A549 (cell line): ENCODE measurements at regions of chr21 and their contacts with region 1.

Region 1: GRCh38 chr21:17554679-17555465 is 42.0 kb downstream of the CXADR start:
- DNase-seq: peak; percentile 26 to 27
- ATAC-seq: peak in 1 of 2 experiments; percentile 81; a peak in 3 of 6 replicates
- H3K4me3 ChIP-seq: no peak overlapping the region
- H3K27ac ChIP-seq: no peak overlapping the region
- H3K4me1 ChIP-seq: no peaks in the 10 kb centered on the region
- CTCF ChIP-seq: peak; percentile 53
- EP300 ChIP-seq: no peak
- POLR2A ChIP-seq: no peak
- RAD21 ChIP-seq: peak; percentile 67 to 70

Region 2: GRCh38 chr21:17387030-17387617 is 167.7 kb before region 1 on chr21:
- CTCF ChIA-PET with region 1: interaction called, 66 read pairs
- POLR2A ChIA-PET with region 1: interaction called, 3 read pairs
- DNase-seq: peak; percentile 25 to 51
- ATAC-seq: peak; percentile 54 to 73; a peak in 4 of 6 replicates
- H3K4me3 ChIP-seq: no peak overlapping the region
- H3K27ac ChIP-seq: no peak overlapping the region
- H3K4me1 ChIP-seq: no peaks in the 10 kb centered on the region
- CTCF ChIP-seq: peak; percentile 70
- EP300 ChIP-seq: no peak
- POLR2A ChIP-seq: no peak
- RAD21 ChIP-seq: peak; percentile 80 to 84